ENCODE measurements at regions of chr2 and their contacts with region 1.

Region 1: DNA sequence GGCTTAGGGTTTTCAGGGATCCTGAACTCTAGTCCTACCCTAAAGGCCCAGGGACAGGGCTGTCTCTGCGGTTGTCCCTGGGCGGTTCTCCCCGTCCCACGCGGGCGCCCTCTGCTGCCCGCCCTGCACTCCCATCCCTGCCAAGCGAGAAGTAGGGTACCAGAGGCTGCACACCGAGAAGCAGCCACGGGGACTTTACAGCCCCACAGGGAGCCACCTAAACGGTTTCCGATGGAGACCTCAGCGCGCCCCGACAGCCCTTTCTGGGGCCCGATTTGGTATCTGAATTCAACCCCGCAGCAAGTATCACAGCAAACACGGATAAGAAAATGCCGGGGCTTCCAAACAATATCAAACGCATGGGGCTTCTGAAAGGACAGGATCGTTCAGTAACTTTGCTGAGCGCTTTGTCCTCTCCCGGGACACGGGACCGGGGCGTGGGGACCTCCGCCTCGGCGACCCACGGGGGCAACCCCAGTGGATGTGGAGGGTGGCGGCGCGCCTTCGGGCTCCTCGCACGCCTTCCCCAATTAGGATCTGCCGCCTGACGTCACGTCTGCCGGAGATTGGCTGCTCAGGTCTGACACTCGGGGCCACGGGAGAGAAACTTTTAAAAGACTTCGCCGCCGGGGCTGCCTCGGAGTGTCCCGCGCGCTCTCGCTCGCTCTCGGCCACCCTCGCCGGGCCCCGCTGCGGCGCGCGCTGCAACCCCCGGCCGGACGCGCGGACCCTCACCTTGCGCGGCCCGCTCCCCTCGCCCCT is at the start of gene LTBP1:
- DNase-seq: peak; percentile 3 to 66 (median 18)
- ATAC-seq: peak; percentile 80
- H3K4me3 ChIP-seq: peak within 1 kb of the TSS; percentile 56
- H3K4me3 Mint-ChIP-seq: peak within 1 kb of the TSS; percentile 64 to 87 (median 81)
- H3K27ac ChIP-seq: no peak within 1 kb of the TSS
- H3K27ac Mint-ChIP-seq: peak within 1 kb of the TSS in 1 of 9 donors; percentile 55
- H3K4me1 ChIP-seq: no peaks in the 10 kb centered on the region
- H3K4me1 Mint-ChIP-seq: peaks cover 3 to 12% (median 5%) of the 10 kb centered on the region in 7 donors
- H3K27me3 ChIP-seq: peaks cover 0 to 7% of the 10 kb centered on the region in 2 donors
- H3K27me3 Mint-ChIP-seq: peaks cover 22 to 40% (median 36%) of the 10 kb centered on the region in 5 donors
- total RNA-seq, gene LTBP1: 0.29 to 2.1 TPM in 2 of 5 experiments, not detected in the others

Region 2: DNA sequence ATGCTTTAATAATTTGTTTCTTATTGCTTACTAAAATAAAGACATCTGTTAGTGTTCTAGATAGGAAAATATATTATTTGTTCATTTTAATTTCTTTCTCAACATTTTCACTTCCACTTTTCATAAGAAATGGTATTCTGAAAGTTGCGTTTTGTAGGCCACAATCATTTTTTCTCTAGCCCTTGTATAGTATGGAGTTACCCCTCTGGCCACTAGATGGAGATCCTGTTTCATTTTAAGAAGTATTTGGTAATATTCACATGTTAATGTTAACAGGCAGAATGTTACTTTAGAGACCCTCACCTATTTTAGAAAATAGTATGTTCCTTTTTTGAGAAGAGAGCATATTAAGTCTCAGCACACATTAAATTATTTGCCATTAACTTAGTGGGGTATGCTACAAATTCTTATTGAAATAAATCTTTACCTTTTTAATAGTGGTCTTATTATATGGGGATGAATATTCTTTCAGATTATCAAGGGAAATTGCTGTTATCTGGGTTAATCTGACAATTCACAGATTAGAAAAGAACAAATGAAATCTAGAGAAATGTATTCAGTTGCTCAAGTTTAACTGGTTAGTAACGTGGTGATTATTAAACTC is 392.6 kb before region 1 on chr2:
- CTCF ChIA-PET with region 1: no interaction called
- POLR2A ChIA-PET with region 1: no interaction called
- intact Hi-C with region 1: loop called in 1 of 2 experiments (anchors 1 kb)
- DNase-seq: peak in 6 of 9 donors; percentile 9 to 44 (median 28)
- ATAC-seq: peak; percentile 80
- H3K4me3 ChIP-seq: no peak overlapping the region
- H3K4me3 Mint-ChIP-seq: no peak overlapping the region
- H3K27ac ChIP-seq: peak overlapping the region; percentile 29
- H3K27ac Mint-ChIP-seq: no peak overlapping the region
- H3K4me1 ChIP-seq: no peaks in the 10 kb centered on the region
- H3K4me1 Mint-ChIP-seq: no peaks in the 10 kb centered on the region
- H3K27me3 ChIP-seq: no peaks in the 10 kb centered on the region
- H3K27me3 Mint-ChIP-seq: no peaks in the 10 kb centered on the region

Region 3: GRCh38 chr2:32772638-32773447 is 173.7 kb before region 1 on chr2:
- CTCF ChIA-PET with region 1: no interaction called
- POLR2A ChIA-PET with region 1: no interaction called
- intact Hi-C with region 1: loop called in 1 of 2 experiments (anchors 10 kb)
- DNase-seq: no peak
- ATAC-seq: no peak
- H3K4me3 ChIP-seq: no peak overlapping the region
- H3K4me3 Mint-ChIP-seq: no peak overlapping the region
- H3K27ac ChIP-seq: no peak overlapping the region
- H3K27ac Mint-ChIP-seq: no peak overlapping the region
- H3K4me1 ChIP-seq: no peaks in the 10 kb centered on the region
- H3K4me1 Mint-ChIP-seq: no peaks in the 10 kb centered on the region
- H3K27me3 ChIP-seq: no peaks in the 10 kb centered on the region
- H3K27me3 Mint-ChIP-seq: no peaks in the 10 kb centered on the region

Measured in naive thymus-derived CD4-positive, alpha-beta T cell (primary cell).